ENCODE measurements at regions of chr11 and their contacts with region 1.

Region 1: GRCh38 chr11:69101115-69101791 is 52.5 kb downstream of the TPCN2 start:
- DNase-seq: peak; percentile 94
- H3K4me3 Mint-ChIP-seq: no peak overlapping the region
- H3K27ac Mint-ChIP-seq: peak overlapping the region; percentile 42
- H3K4me1 Mint-ChIP-seq: peaks cover 6% of the 10 kb centered on the region
- H3K27me3 Mint-ChIP-seq: no peaks in the 10 kb centered on the region
- CTCF ChIP-seq: peak; percentile 100

Region 2: GRCh38 chr11:69111624-69112542 is 10.6 kb after region 1 on chr11:
- CTCF ChIA-PET with region 1: interaction called, 11 read pairs
- POLR2A ChIA-PET with region 1: no interaction called
- intact Hi-C with region 1: no loop called
- DNase-seq: no peak
- H3K4me3 Mint-ChIP-seq: no peak overlapping the region
- H3K27ac Mint-ChIP-seq: no peak overlapping the region
- H3K4me1 Mint-ChIP-seq: no peaks in the 10 kb centered on the region
- H3K27me3 Mint-ChIP-seq: peaks cover 11% of the 10 kb centered on the region
- CTCF ChIP-seq: no peak

Region 3: GRCh38 chr11:69122642-69123431 is 21.6 kb after region 1 on chr11:
- CTCF ChIA-PET with region 1: interaction called, 14 read pairs
- POLR2A ChIA-PET with region 1: interaction called, 4 read pairs
- intact Hi-C with region 1: no loop called
- DNase-seq: peak; percentile 92
- H3K4me3 Mint-ChIP-seq: peak overlapping the region; percentile 47
- H3K27ac Mint-ChIP-seq: peak overlapping the region; percentile 71
- H3K4me1 Mint-ChIP-seq: peaks cover 31% of the 10 kb centered on the region
- H3K27me3 Mint-ChIP-seq: no peaks in the 10 kb centered on the region
- CTCF ChIP-seq: no peak

Region 4: GRCh38 chr11:69655328-69656108 is 554.3 kb after region 1 on chr11:
- CTCF ChIA-PET with region 1: interaction called, 11 read pairs
- POLR2A ChIA-PET with region 1: interaction called, 3 read pairs
- intact Hi-C with region 1: no loop called
- DNase-seq: no peak
- H3K4me3 Mint-ChIP-seq: no peak overlapping the region
- H3K27ac Mint-ChIP-seq: no peak overlapping the region
- H3K4me1 Mint-ChIP-seq: no peaks in the 10 kb centered on the region
- H3K27me3 Mint-ChIP-seq: no peaks in the 10 kb centered on the region
- CTCF ChIP-seq: no peak

Region 5: GRCh38 chr11:69670158-69670845 is 569.0 kb after region 1 on chr11:
- CTCF ChIA-PET with region 1: interaction called, 62 read pairs
- POLR2A ChIA-PET with region 1: interaction called, 8 read pairs
- intact Hi-C with region 1: loop called (anchors 1 kb)
- DNase-seq: peak; percentile 77
- H3K4me3 Mint-ChIP-seq: no peak overlapping the region
- H3K27ac Mint-ChIP-seq: no peak overlapping the region
- H3K4me1 Mint-ChIP-seq: peaks cover 4% of the 10 kb centered on the region
- H3K27me3 Mint-ChIP-seq: no peaks in the 10 kb centered on the region
- CTCF ChIP-seq: peak; percentile 94